IMR-90 (cell line): ENCODE measurements at regions of chr5 and their contacts with region 1.

Region 1: GRCh38 chr5:84874196-84874595 is 489.5 kb upstream of the EDIL3 start:
- DNase-seq: no peak
- ATAC-seq: no peak
- H3K4me3 ChIP-seq: no peak overlapping the region
- H3K27ac ChIP-seq: no peak overlapping the region
- H3K4me1 ChIP-seq: peaks cover 4% of the 10 kb centered on the region
- H3K27me3 ChIP-seq: no peaks in the 10 kb centered on the region
- CTCF ChIP-seq: no peak
- POLR2A ChIP-seq: no peak
- RAD21 ChIP-seq: no peak

Region 2: DNA sequence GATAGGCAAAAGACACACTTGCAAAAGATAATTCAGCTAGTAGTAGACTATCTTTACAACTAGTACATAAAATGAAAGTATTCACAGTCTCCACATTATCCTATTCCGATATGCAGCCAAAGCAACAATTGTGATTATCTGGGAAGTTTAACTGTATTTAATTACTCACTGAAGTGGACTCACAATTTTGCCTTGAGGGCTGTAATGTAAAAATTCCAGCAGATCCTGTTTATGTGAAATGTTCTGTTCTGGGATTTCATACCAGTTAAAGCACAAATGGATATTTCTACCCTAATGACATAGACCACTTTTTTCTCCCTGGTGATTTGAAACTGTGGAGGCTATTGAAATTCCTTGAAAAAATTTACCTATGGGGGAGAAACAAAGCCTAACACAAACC is 15.1 kb before region 1 on chr5:
- CTCF ChIA-PET with region 1: no interaction called
- POLR2A ChIA-PET with region 1: no interaction called
- dilution Hi-C with region 1: no loop called
- in situ Hi-C with region 1: no loop called
- intact Hi-C with region 1: loop called (anchors 2 kb)
- DNase-seq: no peak
- ATAC-seq: no peak
- H3K4me3 ChIP-seq: no peak overlapping the region
- H3K27ac ChIP-seq: no peak overlapping the region
- H3K4me1 ChIP-seq: no peaks in the 10 kb centered on the region
- H3K27me3 ChIP-seq: no peaks in the 10 kb centered on the region
- CTCF ChIP-seq: no peak
- POLR2A ChIP-seq: no peak
- RAD21 ChIP-seq: no peak